Sciatic nerve (tissue), 2 donors: ENCODE measurements at regions of chr1 and their contacts with region 1.

Region 1: DNA sequence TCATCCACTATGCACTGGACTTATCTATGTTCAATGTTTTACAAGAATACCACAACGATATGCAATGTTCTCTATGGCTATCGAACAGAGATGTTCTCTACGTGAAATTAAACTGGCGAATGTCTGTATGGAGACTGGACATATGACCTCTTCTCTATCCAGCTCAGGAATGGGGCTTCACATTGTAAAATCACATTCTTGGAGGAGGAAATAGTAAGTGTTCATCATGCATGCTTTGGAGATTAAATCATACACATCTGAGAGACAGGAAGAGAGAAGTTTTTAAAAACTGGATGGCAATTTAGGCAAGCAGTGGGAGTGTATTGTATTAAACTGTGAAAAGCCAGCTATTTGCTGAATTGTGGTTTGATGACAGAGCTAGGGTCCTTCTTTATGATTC is 47.9 kb upstream of the RGL1 start:
- DNase-seq: no peak
- ATAC-seq: no peak

Region 2: GRCh38 chr1:185170291-185170848 is 1413.3 kb after region 1 on chr1:
- intact Hi-C with region 1: no loop called
- DNase-seq: no peak
- ATAC-seq: peak; percentile 79

Region 3: DNA sequence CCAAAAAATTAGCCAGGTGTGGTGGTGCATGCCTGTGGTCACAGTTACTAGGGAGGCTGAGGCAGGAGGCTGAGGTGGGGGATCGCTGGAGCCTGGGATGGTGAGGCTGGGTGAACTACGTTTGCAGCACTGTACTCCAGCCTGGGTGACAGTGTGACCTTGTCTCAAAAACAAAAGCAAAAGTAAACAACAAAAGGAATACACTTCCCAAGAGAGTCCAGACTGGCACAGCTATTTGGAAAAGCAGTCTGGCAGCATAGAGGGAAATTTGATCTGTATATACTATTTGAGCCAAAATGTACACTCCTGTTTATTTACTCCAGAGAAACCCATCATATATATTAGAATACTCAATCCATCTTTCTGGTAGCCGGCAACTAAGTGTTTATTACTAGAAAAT is 1870.1 kb after region 1 on chr1:
- intact Hi-C with region 1: loop called (anchors 10 kb)
- DNase-seq: no peak
- ATAC-seq: no peak